ENCODE measurements at regions of chr14 and their contacts with region 1.

Region 1: GRCh38 chr14:69879175-69880043 is at the start of gene SMOC1:
- DNase-seq: peak; percentile 86 to 95 (median 92)
- ATAC-seq: peak; percentile 90 to 95 (median 92)
- H3K4me3 ChIP-seq: peak within 1 kb of the TSS; percentile 2 to 70 (median 46)
- H3K27ac ChIP-seq: peak within 1 kb of the TSS in 2 of 4 donors; percentile 46 to 63
- H3K4me1 ChIP-seq: peaks cover 0 to 14% (median 0%) of the 10 kb centered on the region in 3 donors
- H3K27me3 ChIP-seq: no peaks in the 10 kb centered on the region
- CTCF ChIP-seq: no peak
- total RNA-seq, gene SMOC1: 2.2 to 55.7 (median 6.3) TPM

Region 2: GRCh38 chr14:70013269-70013873 is 134.0 kb after region 1 on chr14:
- intact Hi-C with region 1: loop called in 1 of 3 experiments (anchors 5 kb)
- DNase-seq: peak in 4 of 6 donors; percentile 18 to 84 (median 62)
- ATAC-seq: peak; percentile 72 to 92 (median 74)
- H3K4me3 ChIP-seq: no peak overlapping the region
- H3K27ac ChIP-seq: no peak overlapping the region
- H3K4me1 ChIP-seq: no peaks in the 10 kb centered on the region
- H3K27me3 ChIP-seq: no peaks in the 10 kb centered on the region
- CTCF ChIP-seq: peak; percentile 46 to 71 (median 50)

Region 3: DNA sequence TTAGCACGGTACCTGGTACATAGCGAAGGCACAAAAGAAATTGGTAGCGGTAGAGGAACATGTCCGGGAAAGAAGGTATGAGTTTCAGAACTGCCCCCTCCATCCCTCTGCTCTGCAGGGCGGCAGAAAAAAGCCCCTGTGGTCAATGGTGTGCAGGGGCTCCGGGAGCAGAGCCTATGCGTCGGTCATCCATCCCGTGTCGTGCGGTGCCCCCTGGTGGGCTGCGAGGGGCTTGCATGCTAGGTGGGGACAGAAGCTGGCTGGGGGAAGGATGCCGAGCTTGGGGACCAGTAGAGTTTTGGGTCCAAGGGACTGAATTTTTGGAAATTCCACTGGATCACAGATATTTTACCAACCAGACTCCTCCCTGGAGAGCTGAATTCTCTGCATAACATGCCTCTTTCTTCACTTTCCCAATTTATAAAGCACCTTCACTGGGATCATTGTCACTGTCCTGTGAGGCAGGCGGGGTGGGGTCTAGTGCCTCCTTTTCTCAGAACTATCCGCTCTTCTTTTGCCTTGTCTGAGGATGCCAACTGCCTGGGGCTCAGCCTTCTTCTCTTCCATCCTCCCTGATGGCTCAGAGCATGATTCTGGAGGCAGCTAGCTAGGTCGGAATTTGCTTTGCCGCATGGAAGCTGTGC is 148.5 kb after region 1 on chr14:
- intact Hi-C with region 1: loop called in 1 of 3 experiments (anchors 10 kb)
- DNase-seq: peak; percentile 40 to 95 (median 76)
- ATAC-seq: peak; percentile 70 to 97 (median 92)
- H3K4me3 ChIP-seq: no peak overlapping the region
- H3K27ac ChIP-seq: no peak overlapping the region
- H3K4me1 ChIP-seq: no peaks in the 10 kb centered on the region
- H3K27me3 ChIP-seq: no peaks in the 10 kb centered on the region
- CTCF ChIP-seq: peak; percentile 80 to 93 (median 83)

Region 4: GRCh38 chr14:70383000-70383399 is 503.6 kb after region 1 on chr14:
- intact Hi-C with region 1: no loop called
- DNase-seq: no peak
- ATAC-seq: no peak
- H3K4me3 ChIP-seq: no peak overlapping the region
- H3K27ac ChIP-seq: no peak overlapping the region
- H3K4me1 ChIP-seq: no peaks in the 10 kb centered on the region
- H3K27me3 ChIP-seq: no peaks in the 10 kb centered on the region
- CTCF ChIP-seq: no peak